Naive thymus-derived CD4-positive, alpha-beta T cell (primary cell): ENCODE measurements at regions of chr1 and their contacts with region 1.

Region 1: GRCh38 chr1:156212833-156213643 is at the start of gene PMF1:
- DNase-seq: peak; percentile 83 to 97 (median 95)
- ATAC-seq: peak; percentile 98
- H3K4me3 ChIP-seq: peak within 1 kb of the TSS; percentile 85
- H3K4me3 Mint-ChIP-seq: peak within 1 kb of the TSS; percentile 90 to 99 (median 96)
- H3K27ac ChIP-seq: peak within 1 kb of the TSS; percentile 94
- H3K27ac Mint-ChIP-seq: peak within 1 kb of the TSS; percentile 98 to 100 (median 99)
- H3K4me1 ChIP-seq: peaks cover 8 to 17% of the 10 kb centered on the region in 2 donors
- H3K4me1 Mint-ChIP-seq: peaks cover 20 to 58% (median 41%) of the 10 kb centered on the region in 7 donors
- H3K27me3 ChIP-seq: no peaks in the 10 kb centered on the region
- H3K27me3 Mint-ChIP-seq: no peaks in the 10 kb centered on the region
- total RNA-seq, gene PMF1: 42.2 to 76.1 (median 58.2) TPM

Region 2: DNA sequence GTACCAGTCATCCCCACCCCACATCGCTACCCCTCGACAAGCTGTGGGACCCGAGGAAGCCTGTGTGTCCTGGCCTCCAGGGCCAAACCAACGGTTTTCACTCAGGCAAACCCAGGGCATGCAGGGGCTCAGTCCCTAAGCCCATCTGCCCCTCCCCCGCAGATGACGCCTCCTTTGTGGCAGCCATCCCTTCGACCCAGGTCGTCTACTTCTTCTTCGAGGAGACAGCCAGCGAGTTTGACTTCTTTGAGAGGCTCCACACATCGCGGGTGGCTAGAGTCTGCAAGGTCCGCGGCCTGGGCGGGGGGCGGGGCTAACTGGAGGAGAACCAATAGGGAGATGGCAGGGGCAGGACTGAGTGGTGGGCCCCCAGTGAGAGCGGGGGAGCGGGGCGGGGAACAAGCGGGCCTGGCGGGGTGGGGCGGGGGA is 52.3 kb before region 1 on chr1:
- CTCF ChIA-PET with region 1: no interaction called
- POLR2A ChIA-PET with region 1: interaction called, 8 read pairs
- intact Hi-C with region 1: loop called in 1 of 2 experiments (anchors 1 kb)
- DNase-seq: peak in 7 of 9 donors; percentile 14 to 67 (median 33)
- ATAC-seq: peak; percentile 89
- H3K4me3 ChIP-seq: peak overlapping the region; percentile 47
- H3K4me3 Mint-ChIP-seq: peak overlapping the region; percentile 67 to 92 (median 81)
- H3K27ac ChIP-seq: no peak overlapping the region
- H3K27ac Mint-ChIP-seq: peak overlapping the region in 5 of 9 donors; percentile 48 to 81 (median 73)
- H3K4me1 ChIP-seq: peaks cover 5 to 11% of the 10 kb centered on the region in 2 donors
- H3K4me1 Mint-ChIP-seq: peaks cover 4 to 40% (median 20%) of the 10 kb centered on the region in 7 donors
- H3K27me3 ChIP-seq: no peaks in the 10 kb centered on the region
- H3K27me3 Mint-ChIP-seq: no peaks in the 10 kb centered on the region

Region 3: GRCh38 chr1:156198831-156199349 is 14.1 kb before region 1 on chr1:
- CTCF ChIA-PET with region 1: interaction called, 3 read pairs
- POLR2A ChIA-PET with region 1: interaction called, 30 read pairs
- intact Hi-C with region 1: no loop called
- DNase-seq: no peak
- ATAC-seq: no peak
- H3K4me3 ChIP-seq: no peak overlapping the region
- H3K4me3 Mint-ChIP-seq: peak overlapping the region in 3 of 10 donors; percentile 19 to 77 (median 24)
- H3K27ac ChIP-seq: no peak overlapping the region
- H3K27ac Mint-ChIP-seq: peak overlapping the region in 6 of 9 donors; percentile 6 to 89 (median 52)
- H3K4me1 ChIP-seq: peaks cover 12 to 40% of the 10 kb centered on the region in 2 donors
- H3K4me1 Mint-ChIP-seq: peaks cover 29 to 62% (median 56%) of the 10 kb centered on the region in 7 donors
- H3K27me3 ChIP-seq: no peaks in the 10 kb centered on the region
- H3K27me3 Mint-ChIP-seq: no peaks in the 10 kb centered on the region

Region 4: DNA sequence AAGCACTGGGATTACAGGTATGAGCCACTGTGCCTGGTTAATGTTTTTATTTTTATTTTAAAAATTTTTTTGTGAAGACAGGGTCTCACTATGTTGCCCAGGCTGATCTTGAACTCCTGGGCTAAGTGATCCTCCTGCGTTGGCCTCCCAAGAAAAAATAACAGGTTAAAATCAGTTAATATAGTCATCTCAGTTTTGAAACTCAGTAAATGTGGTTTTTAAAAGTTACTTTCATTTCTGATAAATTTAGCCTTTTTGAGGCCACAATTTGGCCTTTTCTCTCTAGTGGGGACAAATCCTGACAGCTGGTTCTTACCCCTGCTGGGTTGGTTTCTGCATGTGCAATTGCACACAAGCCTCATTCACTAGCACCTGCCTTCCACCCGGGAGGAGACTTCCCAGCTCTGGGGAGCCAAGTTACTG is 13.1 kb after region 1 on chr1:
- CTCF ChIA-PET with region 1: interaction called, 12 read pairs
- POLR2A ChIA-PET with region 1: interaction called, 13 read pairs
- intact Hi-C with region 1: loop called (anchors 1 kb)
- DNase-seq: no peak
- ATAC-seq: no peak
- H3K4me3 ChIP-seq: no peak overlapping the region
- H3K4me3 Mint-ChIP-seq: peak overlapping the region in 1 of 10 donors; percentile 11
- H3K27ac ChIP-seq: no peak overlapping the region
- H3K27ac Mint-ChIP-seq: peak overlapping the region in 2 of 9 donors; percentile 67 to 76
- H3K4me1 ChIP-seq: no peaks in the 10 kb centered on the region
- H3K4me1 Mint-ChIP-seq: peaks cover 11 to 44% (median 18%) of the 10 kb centered on the region in 7 donors
- H3K27me3 ChIP-seq: no peaks in the 10 kb centered on the region
- H3K27me3 Mint-ChIP-seq: no peaks in the 10 kb centered on the region

Region 5: GRCh38 chr1:156282479-156283222 is 69.6 kb after region 1 on chr1 and contains the start of gene SMG5:
- CTCF ChIA-PET with region 1: no interaction called
- POLR2A ChIA-PET with region 1: interaction called, 28 read pairs
- intact Hi-C with region 1: loop called in 1 of 2 experiments (anchors 1 kb)
- DNase-seq: peak; percentile 89 to 98 (median 96)
- ATAC-seq: peak; percentile 95
- H3K4me3 ChIP-seq: peak within 1 kb of the TSS; percentile 93
- H3K4me3 Mint-ChIP-seq: peak within 1 kb of the TSS; percentile 85 to 99 (median 94)
- H3K27ac ChIP-seq: peak within 1 kb of the TSS; percentile 89
- H3K27ac Mint-ChIP-seq: peak within 1 kb of the TSS; percentile 89 to 98 (median 95)
- H3K4me1 ChIP-seq: peaks cover 15 to 22% of the 10 kb centered on the region in 2 donors
- H3K4me1 Mint-ChIP-seq: peaks cover 29 to 51% (median 39%) of the 10 kb centered on the region in 7 donors
- H3K27me3 ChIP-seq: no peaks in the 10 kb centered on the region
- H3K27me3 Mint-ChIP-seq: peaks cover 0 to 3% (median 0%) of the 10 kb centered on the region in 5 donors
- total RNA-seq, gene SMG5: 65.7 to 74.0 (median 69.4) TPM

Region 6: DNA sequence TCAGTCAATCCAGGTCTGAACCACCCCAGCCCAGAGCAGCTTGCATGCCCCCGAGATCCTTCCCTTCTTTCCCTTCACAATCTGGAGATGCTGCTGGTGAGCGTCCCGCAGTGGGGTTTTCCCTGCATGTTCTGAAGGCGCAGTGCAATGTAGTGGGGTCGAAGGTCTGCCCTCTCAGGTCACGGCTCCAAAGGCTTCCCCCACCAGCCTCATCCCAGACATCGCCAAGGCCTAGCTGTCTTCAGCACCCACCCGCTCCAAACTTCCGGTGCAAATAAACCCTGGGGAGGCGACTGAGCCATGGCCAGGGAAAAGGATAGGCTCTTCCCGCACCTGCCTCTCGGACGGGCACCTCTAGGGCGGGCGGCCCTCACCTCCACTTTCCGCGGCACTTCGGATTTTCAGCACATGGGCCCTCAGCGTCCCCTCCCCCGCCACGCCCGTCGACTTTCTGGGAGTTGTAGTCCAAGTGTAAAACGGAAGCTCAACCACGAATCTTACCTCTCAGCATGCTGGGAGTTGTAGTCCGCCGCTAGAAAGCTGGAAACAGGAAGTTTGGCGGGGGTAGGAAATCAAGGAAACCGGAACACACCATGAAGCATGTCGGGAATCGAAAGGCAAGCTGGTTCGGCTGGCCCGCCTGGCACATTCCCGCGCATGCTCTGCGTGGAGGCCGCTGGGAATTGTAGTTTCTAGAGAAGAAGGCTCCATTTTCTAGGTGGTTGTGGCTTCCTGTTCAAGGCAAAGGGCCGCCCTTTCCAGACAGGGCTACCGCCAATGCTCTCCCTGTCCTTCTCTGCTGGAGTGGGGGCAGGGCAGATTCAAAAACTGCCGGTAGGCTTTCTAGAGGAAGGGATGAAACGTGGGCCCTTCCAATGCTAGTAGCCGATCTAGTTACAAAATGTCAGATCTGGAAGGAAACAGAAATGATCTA is 527.9 kb after region 1 on chr1 and contains the start of gene MRPL24:
- CTCF ChIA-PET with region 1: no interaction called
- POLR2A ChIA-PET with region 1: interaction called, 3 read pairs
- intact Hi-C with region 1: loop called in 1 of 2 experiments (anchors 2 kb)
- DNase-seq: peak; percentile 84 to 99 (median 98)
- ATAC-seq: peak; percentile 95
- H3K4me3 ChIP-seq: peak within 1 kb of the TSS; percentile 79
- H3K4me3 Mint-ChIP-seq: peak within 1 kb of the TSS; percentile 94 to 99 (median 98)
- H3K27ac ChIP-seq: peak within 1 kb of the TSS; percentile 90
- H3K27ac Mint-ChIP-seq: peak within 1 kb of the TSS; percentile 86 to 99 (median 98)
- H3K4me1 ChIP-seq: peaks cover 17 to 20% of the 10 kb centered on the region in 2 donors
- H3K4me1 Mint-ChIP-seq: peaks cover 23 to 50% (median 40%) of the 10 kb centered on the region in 7 donors
- H3K27me3 ChIP-seq: no peaks in the 10 kb centered on the region
- H3K27me3 Mint-ChIP-seq: no peaks in the 10 kb centered on the region
- total RNA-seq, gene MRPL24: 19.1 to 68.9 (median 47.2) TPM